ENCODE measurements at regions of chr9 and their contacts with region 1.

Region 1: DNA sequence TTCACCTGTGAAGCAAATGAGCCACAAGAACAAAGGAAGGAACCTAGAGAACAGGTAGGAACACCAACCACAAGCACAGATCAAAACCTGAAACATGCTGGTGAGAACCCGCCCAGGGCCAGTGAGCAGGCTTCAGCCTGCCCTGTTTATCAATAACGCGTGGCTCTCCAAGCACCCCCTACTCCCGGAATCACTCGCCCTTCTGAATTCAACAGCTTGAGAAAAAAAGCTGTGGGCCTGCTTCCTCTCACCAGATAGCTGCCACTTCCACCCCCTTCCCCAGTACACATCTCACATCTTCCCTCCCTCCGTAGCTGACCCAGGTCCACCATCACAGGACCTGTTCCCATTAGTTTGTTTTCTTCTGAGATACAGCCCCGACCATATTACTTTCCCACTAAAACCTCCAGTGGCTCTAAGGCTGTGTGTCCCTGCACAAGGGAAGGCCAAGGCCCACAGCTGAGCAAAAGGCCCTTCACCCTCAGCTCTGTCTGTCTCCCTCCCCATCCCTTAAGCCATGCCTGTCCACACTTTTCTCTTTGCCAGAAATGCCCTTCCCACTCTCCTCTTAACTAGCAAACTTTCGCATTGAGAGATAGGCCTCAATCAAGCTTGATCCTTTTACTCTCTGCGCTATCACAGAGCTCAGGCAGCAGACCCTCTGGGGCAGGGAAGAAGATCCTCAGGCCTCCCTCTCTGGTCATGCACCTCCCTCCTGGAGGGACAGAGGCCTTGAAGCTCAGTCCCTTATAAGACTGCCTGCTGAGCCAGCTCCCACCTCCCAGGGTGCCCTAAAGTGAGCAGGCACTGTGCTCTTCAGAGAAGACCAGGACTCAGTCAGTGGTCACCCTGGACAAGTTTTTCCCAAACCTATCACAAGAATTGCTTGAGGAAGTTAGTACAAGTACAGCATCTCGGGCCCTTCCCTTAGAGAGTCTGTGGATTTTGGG is 30.1 kb downstream of the B4GALT1 start:
- DNase-seq: peak in 1 of 3 donors; percentile 39
- H3K4me3 ChIP-seq: no peak overlapping the region
- H3K27ac ChIP-seq: peak overlapping the region in 1 of 2 experiments; percentile 25
- H3K4me1 ChIP-seq: peaks cover 6 to 50% (median 24%) of the 10 kb centered on the region in 4 experiments
- H3K27me3 ChIP-seq: no peaks in the 10 kb centered on the region

Region 2: GRCh38 chr9:33125871-33126822 is 10.8 kb before region 1 on chr9:
- CTCF ChIA-PET with region 1: interaction called, 20 read pairs
- POLR2A ChIA-PET with region 1: no interaction called
- DNase-seq: peak; percentile 45 to 76 (median 67)
- H3K4me3 ChIP-seq: peak overlapping the region in 1 of 7 experiments; percentile 41
- H3K27ac ChIP-seq: peak overlapping the region in 1 of 2 experiments; percentile 5
- H3K4me1 ChIP-seq: peaks cover 11 to 37% (median 26%) of the 10 kb centered on the region in 4 experiments
- H3K27me3 ChIP-seq: no peaks in the 10 kb centered on the region

Region 3: GRCh38 chr9:33159760-33160127 is 22.7 kb after region 1 on chr9:
- CTCF ChIA-PET with region 1: interaction called, 16 read pairs
- POLR2A ChIA-PET with region 1: no interaction called
- DNase-seq: peak; percentile 76 to 88 (median 86)
- H3K4me3 ChIP-seq: peak overlapping the region in 3 of 7 experiments; percentile 19 to 57 (median 42)
- H3K27ac ChIP-seq: peak overlapping the region; percentile 67 to 80
- H3K4me1 ChIP-seq: peaks cover 60 to 97% (median 75%) of the 10 kb centered on the region in 4 experiments
- H3K27me3 ChIP-seq: no peaks in the 10 kb centered on the region

Measured in common myeloid progenitor, CD34-positive (primary cell).